Astrocyte of the cerebellum (primary cell): ENCODE measurements at regions of chr1 and their contacts with region 1.

Region 1: DNA sequence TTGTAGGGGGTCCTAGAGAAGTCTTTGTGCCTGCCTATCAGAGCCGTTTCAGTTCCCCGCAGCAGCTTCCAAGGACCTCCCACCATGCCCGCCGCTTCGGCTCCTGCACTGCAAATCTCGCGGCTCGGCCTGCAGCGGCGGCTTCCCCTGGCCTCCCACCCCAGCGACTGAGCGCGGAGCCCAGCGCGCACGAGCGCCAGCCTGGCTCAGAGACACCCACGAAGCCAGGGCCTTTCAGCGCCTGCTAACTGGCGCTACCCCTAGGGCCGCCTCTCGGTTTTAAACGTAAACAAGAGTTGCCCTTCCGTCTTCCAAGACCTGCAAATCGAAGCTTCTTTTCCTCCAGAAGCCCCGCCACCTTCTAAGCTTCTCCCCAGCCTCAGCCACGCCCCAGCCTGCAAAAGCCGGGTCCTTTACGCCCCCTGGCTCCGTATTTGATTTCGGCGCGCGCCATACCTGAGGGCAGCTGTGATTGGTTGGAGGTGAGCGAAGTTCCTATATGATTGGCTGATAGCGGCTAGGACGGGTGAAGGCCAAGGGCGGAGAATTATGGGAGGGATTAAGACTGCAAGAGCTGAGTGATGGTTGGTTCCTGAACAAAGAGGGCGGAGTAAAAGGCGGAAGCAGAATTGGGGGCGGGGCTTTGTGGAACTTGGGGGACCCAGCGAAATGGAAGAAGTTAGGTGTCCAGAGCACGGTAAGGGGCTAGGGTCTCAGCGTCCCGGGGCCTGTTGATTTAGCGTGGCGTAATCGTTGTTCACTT is at the start of gene TTF2:
- DNase-seq: peak; percentile 99
- H3K4me3 ChIP-seq: peak within 1 kb of the TSS; percentile 80
- CTCF ChIP-seq: no peak

Region 2: GRCh38 chr1:116737020-116737854 is 322.6 kb before region 1 on chr1:
- in situ Hi-C with region 1: loop called (anchors 25 kb)
- DNase-seq: peak; percentile 52
- H3K4me3 ChIP-seq: no peak overlapping the region
- CTCF ChIP-seq: peak; percentile 92

Region 3: DNA sequence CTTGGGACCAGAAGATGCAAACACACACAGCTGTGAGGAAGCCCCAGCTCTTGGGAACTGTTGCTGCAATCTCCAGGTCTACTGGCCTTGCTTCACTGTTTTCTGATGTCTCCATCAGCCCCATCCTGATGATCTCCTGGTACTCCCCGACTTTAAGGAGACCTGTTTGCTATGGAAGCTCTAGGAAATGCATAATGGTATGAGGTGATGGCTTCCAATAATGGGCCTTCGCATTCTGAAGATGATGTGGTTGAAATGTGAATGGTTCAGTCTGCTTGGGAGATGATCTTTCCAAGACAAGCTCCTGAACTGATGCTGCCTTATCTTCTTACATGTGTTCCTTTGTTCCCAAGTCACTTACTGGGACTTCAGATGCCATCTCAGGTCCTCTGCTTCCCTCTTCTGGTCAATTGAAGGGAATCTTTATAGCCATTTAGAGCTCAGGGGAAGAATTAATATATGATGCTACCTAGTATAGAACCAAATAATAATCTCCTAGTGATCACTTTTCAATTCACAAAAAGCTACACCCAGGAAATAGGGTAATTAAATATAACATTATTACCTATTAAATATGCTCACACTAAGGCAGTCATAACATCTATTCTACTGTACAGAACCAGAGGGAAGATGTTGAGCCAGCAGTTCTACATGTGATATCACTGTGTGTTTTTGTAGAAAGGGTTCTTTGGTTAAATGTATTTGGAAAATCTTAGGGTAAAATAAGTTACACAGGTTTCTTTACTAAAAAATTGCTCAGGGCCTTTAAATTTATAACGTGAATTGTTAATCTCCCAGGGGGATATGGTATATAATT is 224.7 kb after region 1 on chr1:
- in situ Hi-C with region 1: loop called (anchors 25 kb)
- DNase-seq: peak; percentile 61
- H3K4me3 ChIP-seq: no peak overlapping the region
- CTCF ChIP-seq: peak; percentile 61